ENCODE measurements at regions of chr1 and their contacts with region 1.

Region 1: GRCh38 chr1:95043141-95043980 is 29.4 kb downstream of the ALG14 start:
- DNase-seq: peak; percentile 75 to 82
- H3K4me3 ChIP-seq: no peak overlapping the region
- H3K27ac ChIP-seq: peak overlapping the region; percentile 33 to 34
- H3K4me1 ChIP-seq: no peaks in the 10 kb centered on the region
- H3K27me3 ChIP-seq: no peaks in the 10 kb centered on the region
- CTCF ChIP-seq: peak; percentile 99 to 100 (median 100)
- POLR2A ChIP-seq: no peak

Region 2: DNA sequence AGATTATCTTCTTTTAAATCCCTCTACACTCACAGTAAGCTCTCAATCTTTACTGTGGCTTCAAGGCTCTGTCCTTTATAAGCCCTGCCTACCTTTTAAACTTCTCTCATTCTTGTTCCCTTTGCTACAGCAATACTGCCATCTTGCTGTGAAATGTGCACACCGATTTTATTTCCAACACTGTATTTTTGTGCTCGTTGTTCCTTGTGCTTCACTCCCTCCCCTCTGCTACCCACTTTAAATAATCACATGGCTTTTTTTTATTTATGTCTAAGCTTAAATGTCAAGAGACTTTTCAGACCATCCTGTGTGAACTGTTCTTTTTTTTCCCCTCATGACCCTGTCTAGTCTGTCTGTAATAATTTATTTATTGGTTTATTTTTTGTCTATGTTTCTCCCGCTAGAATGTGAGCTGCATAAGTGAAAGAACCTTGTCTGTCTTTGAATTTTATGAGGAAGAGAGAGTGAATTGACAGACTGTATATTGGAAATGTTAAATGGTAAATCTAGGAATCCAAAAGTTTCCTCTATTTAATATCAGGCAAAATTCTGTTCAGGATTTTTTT is 579.5 kb before region 1 on chr1:
- intact Hi-C with region 1: no loop called
- DNase-seq: no peak
- H3K4me3 ChIP-seq: no peak overlapping the region
- H3K27ac ChIP-seq: no peak overlapping the region
- H3K4me1 ChIP-seq: no peaks in the 10 kb centered on the region
- H3K27me3 ChIP-seq: no peaks in the 10 kb centered on the region
- CTCF ChIP-seq: peak; percentile 19 to 56 (median 49)
- POLR2A ChIP-seq: no peak

Region 3: DNA sequence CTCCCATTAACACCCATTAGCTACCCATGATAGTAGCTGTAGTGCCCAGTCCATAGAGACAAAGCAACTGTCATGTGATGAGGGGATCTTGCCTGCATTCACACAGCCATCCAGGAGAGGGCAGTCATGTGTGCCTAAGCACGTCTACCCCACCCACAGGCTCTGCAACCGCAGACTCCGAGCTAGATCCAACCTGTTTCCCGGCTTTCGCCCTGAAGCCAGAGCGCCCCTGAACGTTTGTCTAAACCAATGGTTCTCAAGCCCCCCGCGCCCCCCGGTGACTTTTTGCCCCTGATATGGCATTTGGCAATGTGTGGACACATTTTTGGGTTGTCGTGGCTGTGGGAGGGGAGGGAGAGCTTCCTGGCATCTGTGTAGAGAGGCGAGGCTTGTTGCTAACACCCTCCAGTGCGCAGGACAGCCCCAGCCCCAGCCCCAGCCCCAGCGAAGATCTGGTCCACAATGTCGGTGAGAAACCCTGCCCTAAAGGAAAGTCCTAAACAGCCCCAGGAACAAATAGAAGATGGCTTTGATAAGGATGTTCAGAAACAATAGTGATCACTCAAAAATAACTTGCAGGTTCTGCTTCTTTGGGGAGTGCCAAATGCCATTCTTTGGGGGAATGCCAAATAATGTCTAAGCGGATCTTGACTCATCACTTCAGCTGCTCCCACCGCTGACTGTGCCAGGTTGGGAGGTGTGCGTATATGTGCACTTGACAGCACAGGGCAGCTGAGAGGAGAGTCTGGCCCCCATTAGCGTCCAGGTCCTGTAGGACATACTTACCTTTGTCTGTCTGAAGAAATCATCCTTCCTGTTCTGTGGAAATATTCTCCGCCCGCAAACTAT is 188.7 kb before region 1 on chr1:
- intact Hi-C with region 1: loop called (anchors 10 kb)
- DNase-seq: peak; percentile 86 to 91
- H3K4me3 ChIP-seq: peak overlapping the region; percentile 33 to 66 (median 40)
- H3K27ac ChIP-seq: peak overlapping the region; percentile 75 to 88
- H3K4me1 ChIP-seq: peaks cover 0 to 7% of the 10 kb centered on the region in 2 donors
- H3K27me3 ChIP-seq: no peaks in the 10 kb centered on the region
- CTCF ChIP-seq: peak; percentile 96 to 99 (median 98)
- POLR2A ChIP-seq: no peak